IMR-90 (cell line): ENCODE measurements at regions of chr12 and their contacts with region 1.

Region 1: GRCh38 chr12:118183705-118184104 is 47.8 kb downstream of the PEBP1 start:
- DNase-seq: no peak
- ATAC-seq: no peak
- H3K4me3 ChIP-seq: no peak overlapping the region
- H3K27ac ChIP-seq: no peak overlapping the region
- H3K4me1 ChIP-seq: no peaks in the 10 kb centered on the region
- H3K27me3 ChIP-seq: no peaks in the 10 kb centered on the region
- CTCF ChIP-seq: no peak
- POLR2A ChIP-seq: no peak
- RAD21 ChIP-seq: no peak

Region 2: GRCh38 chr12:118145113-118145797 is 38.5 kb before region 1 on chr12:
- CTCF ChIA-PET with region 1: no interaction called
- POLR2A ChIA-PET with region 1: no interaction called
- dilution Hi-C with region 1: no loop called
- in situ Hi-C with region 1: no loop called
- intact Hi-C with region 1: no loop called
- DNase-seq: no peak
- ATAC-seq: no peak
- H3K4me3 ChIP-seq: no peak overlapping the region
- H3K27ac ChIP-seq: no peak overlapping the region
- H3K4me1 ChIP-seq: no peaks in the 10 kb centered on the region
- H3K27me3 ChIP-seq: no peaks in the 10 kb centered on the region
- CTCF ChIP-seq: no peak
- POLR2A ChIP-seq: no peak
- RAD21 ChIP-seq: no peak

Region 3: DNA sequence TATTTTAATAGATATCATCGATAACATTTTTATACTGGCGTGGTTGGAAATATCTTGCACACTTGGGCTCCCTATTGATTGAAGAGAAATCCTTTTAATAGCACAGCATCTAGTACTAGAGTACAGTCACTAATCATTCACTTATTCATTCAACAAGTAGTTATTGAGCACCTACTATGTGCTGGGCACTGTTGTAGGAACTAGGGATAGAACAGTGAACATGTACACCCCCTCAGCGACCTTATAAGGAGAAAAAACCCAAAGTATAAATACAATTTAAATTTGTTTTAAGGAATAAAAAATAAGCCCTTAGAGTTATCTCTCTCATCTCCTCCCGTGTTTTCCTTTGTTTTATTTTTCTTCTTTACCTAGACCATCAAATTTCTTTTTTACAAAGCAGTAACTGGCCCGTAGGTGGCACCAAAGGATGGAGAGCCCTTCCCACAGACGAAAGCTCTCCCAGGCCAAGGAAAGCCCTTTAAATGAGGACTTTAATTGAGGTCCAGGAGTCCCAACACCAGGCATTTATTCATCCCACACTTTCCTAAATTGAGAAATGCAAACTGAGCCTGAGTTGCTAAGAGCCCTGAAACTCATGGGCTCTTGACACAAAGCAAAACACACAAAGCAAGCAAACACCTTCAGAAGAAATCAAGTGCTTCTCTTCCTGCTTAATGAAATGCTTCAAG is 18.8 kb before region 1 on chr12:
- CTCF ChIA-PET with region 1: interaction called, 10 read pairs
- POLR2A ChIA-PET with region 1: no interaction called
- dilution Hi-C with region 1: no loop called
- in situ Hi-C with region 1: no loop called
- intact Hi-C with region 1: no loop called
- DNase-seq: peak; percentile 33
- ATAC-seq: peak; percentile 75
- H3K4me3 ChIP-seq: no peak overlapping the region
- H3K27ac ChIP-seq: no peak overlapping the region
- H3K4me1 ChIP-seq: no peaks in the 10 kb centered on the region
- H3K27me3 ChIP-seq: no peaks in the 10 kb centered on the region
- CTCF ChIP-seq: peak; percentile 48
- POLR2A ChIP-seq: no peak
- RAD21 ChIP-seq: peak; percentile 58